Activated CD4-positive, alpha-beta memory T cell treated with anti-CD3 and anti-CD28 coated beads for 36 hours (primary cell): ENCODE measurements at regions of chr1 and their contacts with region 1.

Region 1: GRCh38 chr1:171781176-171781875 is at the start of gene METTL13:
- DNase-seq: peak; percentile 99
- H3K4me3 Mint-ChIP-seq: peak within 1 kb of the TSS; percentile 96
- H3K27ac Mint-ChIP-seq: peak within 1 kb of the TSS; percentile 94
- H3K4me1 Mint-ChIP-seq: peaks cover 59% of the 10 kb centered on the region
- H3K27me3 Mint-ChIP-seq: no peaks in the 10 kb centered on the region
- total RNA-seq, gene METTL13: 45.6 to 49.8 TPM

Region 2: DNA sequence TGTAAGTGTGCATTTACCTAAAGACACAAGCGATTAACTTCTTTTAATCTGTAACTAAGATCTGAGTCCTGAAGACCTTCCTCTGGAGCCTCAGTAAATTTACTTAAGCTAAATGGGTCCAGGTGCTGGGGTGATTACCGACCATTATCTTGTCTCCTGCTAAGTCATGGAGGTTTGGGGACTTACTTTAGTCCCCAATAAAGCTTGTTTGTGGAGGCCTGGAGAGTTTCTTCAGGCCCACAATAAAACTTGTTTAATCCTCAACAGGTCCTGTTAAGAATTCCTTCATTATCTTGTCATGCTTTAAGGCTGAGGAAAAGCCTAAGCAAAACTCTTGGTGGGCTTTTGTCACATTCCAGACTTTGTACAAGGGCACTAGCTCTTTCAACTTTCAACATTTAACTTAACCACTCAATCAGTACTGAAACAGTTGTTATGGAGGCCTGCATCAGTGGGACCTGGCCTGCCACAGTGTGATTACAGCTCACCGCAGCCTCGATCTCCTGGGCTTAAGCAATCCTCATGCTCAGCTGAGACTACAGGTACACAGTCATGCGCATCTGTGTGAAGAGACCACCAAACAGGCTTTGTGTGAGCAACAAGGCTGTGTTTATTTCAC is 383.4 kb before region 1 on chr1:
- CTCF ChIA-PET with region 1: no interaction called
- POLR2A ChIA-PET with region 1: no interaction called
- intact Hi-C with region 1: no loop called
- DNase-seq: no peak
- H3K4me3 Mint-ChIP-seq: no peak overlapping the region
- H3K27ac Mint-ChIP-seq: no peak overlapping the region
- H3K4me1 Mint-ChIP-seq: no peaks in the 10 kb centered on the region
- H3K27me3 Mint-ChIP-seq: no peaks in the 10 kb centered on the region

Region 3: DNA sequence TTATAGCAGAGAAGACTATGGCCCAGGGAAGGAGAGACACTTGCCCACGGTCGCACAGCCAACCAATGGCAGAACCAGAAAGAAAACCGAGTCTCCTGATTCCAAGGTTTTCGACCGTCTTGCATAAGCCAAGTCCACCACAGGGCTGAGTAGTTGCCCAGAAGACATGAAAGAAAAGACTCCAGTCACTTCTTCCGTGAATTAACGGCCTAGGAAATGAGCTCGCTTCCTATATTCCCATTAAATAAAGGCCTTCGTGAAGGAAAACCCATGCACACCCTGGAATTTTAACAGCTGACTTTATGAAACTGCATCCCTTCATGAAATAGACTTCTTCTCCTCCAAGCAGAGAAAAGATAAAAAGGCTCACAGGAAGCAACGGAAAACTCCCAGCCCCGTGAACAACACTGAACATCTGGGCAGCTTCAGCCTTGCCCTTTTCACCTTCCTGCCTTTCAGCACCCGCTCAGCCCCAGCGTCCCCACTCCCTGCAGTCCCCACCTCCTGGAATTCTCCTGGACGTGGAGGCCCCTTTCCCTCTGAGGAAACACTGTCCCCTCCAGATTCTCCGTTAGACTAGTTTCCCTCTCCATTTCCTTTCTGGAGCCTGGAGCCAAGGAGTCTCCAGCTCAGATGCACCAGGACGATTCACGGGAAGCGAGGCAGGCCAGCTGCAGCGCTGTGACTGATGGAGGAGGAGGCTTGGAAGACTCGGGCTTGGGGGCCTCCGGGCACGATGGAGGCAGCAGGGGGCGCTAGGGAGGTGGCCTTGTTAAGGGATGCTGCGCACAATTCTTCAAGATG is 126.2 kb before region 1 on chr1:
- CTCF ChIA-PET with region 1: interaction called, 4 read pairs
- POLR2A ChIA-PET with region 1: no interaction called
- intact Hi-C with region 1: loop called (anchors 5 kb)
- DNase-seq: peak; percentile 90
- H3K4me3 Mint-ChIP-seq: peak overlapping the region; percentile 43
- H3K27ac Mint-ChIP-seq: no peak overlapping the region
- H3K4me1 Mint-ChIP-seq: peaks cover 11% of the 10 kb centered on the region
- H3K27me3 Mint-ChIP-seq: peaks cover 5% of the 10 kb centered on the region

Region 4: GRCh38 chr1:171741872-171742576 is 39.3 kb before region 1 on chr1 and contains the start of gene VAMP4:
- CTCF ChIA-PET with region 1: interaction called, 4 read pairs
- POLR2A ChIA-PET with region 1: interaction called, 11 read pairs
- intact Hi-C with region 1: loop called (anchors 1 kb)
- DNase-seq: peak; percentile 92
- H3K4me3 Mint-ChIP-seq: peak within 1 kb of the TSS; percentile 99
- H3K27ac Mint-ChIP-seq: peak within 1 kb of the TSS; percentile 100
- H3K4me1 Mint-ChIP-seq: peaks cover 47% of the 10 kb centered on the region
- H3K27me3 Mint-ChIP-seq: no peaks in the 10 kb centered on the region
- total RNA-seq, gene VAMP4: 13.2 to 14.2 TPM

Region 5: DNA sequence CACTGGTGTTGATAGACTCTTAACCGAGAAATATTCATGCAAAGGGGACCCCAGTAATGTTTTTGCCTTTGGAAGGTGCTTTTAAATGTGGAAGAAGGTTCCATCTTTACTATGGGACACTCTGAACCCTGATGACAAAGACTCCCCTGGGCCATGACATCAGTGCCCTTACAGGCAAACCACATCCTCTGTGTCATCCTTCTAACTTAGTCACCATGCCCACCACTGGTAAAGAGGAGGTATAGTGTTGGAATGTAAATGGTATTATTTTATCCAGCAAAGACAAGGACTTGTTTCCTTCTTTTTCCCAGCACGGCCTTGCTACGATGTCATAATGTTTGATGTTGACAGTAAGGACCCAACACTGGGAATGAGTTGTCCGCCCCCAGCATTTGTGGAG is 12.8 kb after region 1 on chr1:
- CTCF ChIA-PET with region 1: no interaction called
- POLR2A ChIA-PET with region 1: interaction called, 5 read pairs
- intact Hi-C with region 1: loop called (anchors 1 kb)
- DNase-seq: peak; percentile 79
- H3K4me3 Mint-ChIP-seq: peak overlapping the region; percentile 22
- H3K27ac Mint-ChIP-seq: peak overlapping the region; percentile 94
- H3K4me1 Mint-ChIP-seq: peaks cover 22% of the 10 kb centered on the region
- H3K27me3 Mint-ChIP-seq: no peaks in the 10 kb centered on the region

Region 6: GRCh38 chr1:171841050-171841940 is 60.0 kb after region 1 on chr1 and contains the start of gene DNM3:
- CTCF ChIA-PET with region 1: no interaction called
- POLR2A ChIA-PET with region 1: no interaction called
- intact Hi-C with region 1: loop called (anchors 1 kb)
- DNase-seq: peak; percentile 81
- H3K4me3 Mint-ChIP-seq: peak within 1 kb of the TSS; percentile 77
- H3K27ac Mint-ChIP-seq: no peak within 1 kb of the TSS
- H3K4me1 Mint-ChIP-seq: peaks cover 12% of the 10 kb centered on the region
- H3K27me3 Mint-ChIP-seq: peaks cover 14% of the 10 kb centered on the region
- total RNA-seq, gene DNM3: 0.93 to 1.2 TPM

Region 7: DNA sequence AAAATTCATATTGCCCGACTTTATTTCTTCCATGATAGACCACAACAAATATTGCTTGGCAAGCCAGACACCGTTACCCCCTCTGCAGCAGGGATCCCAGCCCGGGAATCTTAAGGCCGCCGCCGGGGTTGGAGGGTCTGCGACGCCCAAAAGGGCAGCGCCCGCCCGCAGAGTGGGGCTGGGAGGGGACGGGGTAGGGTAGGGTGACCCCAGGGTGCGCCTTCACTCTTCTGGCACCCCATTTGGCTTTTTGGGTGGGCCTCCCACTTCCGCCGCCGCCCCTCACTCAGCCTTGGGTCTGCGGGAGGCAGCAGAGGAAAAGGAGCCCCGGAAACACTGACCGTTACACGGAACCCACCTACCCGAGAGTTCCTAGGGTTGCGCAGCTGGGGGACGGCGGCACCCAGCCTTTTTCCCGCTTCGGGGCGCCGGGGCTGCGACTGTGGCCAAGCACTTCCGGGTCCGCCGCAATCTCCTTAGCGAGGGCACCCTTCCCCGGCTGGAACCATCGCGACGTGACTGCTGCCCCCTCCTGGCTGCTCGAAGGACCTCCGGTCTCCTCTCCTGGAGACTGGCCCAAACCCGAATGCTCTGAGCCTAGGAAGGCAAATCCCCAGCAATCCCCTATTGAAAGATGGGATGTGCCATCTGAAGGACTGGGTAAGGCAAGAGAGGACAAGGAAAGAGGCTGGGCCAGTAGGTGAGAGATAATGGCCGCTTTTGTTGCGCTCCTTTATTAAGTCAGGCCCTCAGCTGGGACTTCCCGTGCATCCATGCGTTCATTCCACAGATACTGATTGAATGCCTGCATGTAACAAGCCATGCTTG is 662.5 kb after region 1 on chr1 and contains the start of gene PIGC:
- CTCF ChIA-PET with region 1: no interaction called
- POLR2A ChIA-PET with region 1: no interaction called
- intact Hi-C with region 1: loop called (anchors 10 kb)
- DNase-seq: peak; percentile 95
- H3K4me3 Mint-ChIP-seq: peak within 1 kb of the TSS; percentile 87
- H3K27ac Mint-ChIP-seq: peak within 1 kb of the TSS; percentile 83
- H3K4me1 Mint-ChIP-seq: peaks cover 38% of the 10 kb centered on the region
- H3K27me3 Mint-ChIP-seq: no peaks in the 10 kb centered on the region
- total RNA-seq, gene PIGC: 16.6 to 17.4 TPM

Region 8: DNA sequence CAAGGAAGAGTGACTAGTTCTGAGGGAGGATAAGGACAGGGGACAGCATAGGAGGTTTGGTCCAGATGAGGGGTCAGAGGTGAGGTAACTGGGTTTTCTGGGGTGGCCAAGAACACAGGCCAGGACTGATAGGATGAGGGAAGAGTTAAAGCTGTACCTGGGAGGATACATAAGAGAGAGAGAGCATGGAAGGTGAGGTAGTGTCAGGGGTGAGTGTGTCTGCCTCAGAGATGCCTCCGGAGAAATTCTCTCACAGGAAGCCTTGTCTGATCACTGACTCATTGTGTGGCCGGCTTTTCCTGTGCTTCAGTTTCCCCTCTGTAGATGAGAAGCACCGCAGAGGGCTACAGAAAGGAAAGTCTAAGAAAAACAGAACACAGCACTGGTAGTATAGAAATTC is 917.8 kb after region 1 on chr1:
- CTCF ChIA-PET with region 1: no interaction called
- POLR2A ChIA-PET with region 1: no interaction called
- intact Hi-C with region 1: loop called (anchors 5 kb)
- DNase-seq: peak; percentile 86
- H3K4me3 Mint-ChIP-seq: peak overlapping the region; percentile 14
- H3K27ac Mint-ChIP-seq: peak overlapping the region; percentile 88
- H3K4me1 Mint-ChIP-seq: peaks cover 50% of the 10 kb centered on the region
- H3K27me3 Mint-ChIP-seq: no peaks in the 10 kb centered on the region